ENCODE measurements at regions of chr12 and their contacts with region 1.

Region 1: GRCh38 chr12:20369305-20370005 is 1.1 kb downstream of the PDE3A start:
- DNase-seq: peak; percentile 82 to 92 (median 90)
- ATAC-seq: peak; percentile 67 to 88 (median 82)
- H3K4me3 ChIP-seq: peak overlapping the region; percentile 62 to 88 (median 76)
- H3K27ac ChIP-seq: peak overlapping the region; percentile 88 to 98 (median 96)
- H3K4me1 ChIP-seq: peaks cover 0 to 16% (median 4%) of the 10 kb centered on the region in 12 donors
- H3K27me3 ChIP-seq: peaks cover 0 to 16% (median 0%) of the 10 kb centered on the region in 9 donors
- CTCF ChIP-seq: peak in 8 of 12 donors; percentile 22 to 52 (median 37)
- POLR2A ChIP-seq: peak in 1 of 2 donors; percentile 91

Region 2: DNA sequence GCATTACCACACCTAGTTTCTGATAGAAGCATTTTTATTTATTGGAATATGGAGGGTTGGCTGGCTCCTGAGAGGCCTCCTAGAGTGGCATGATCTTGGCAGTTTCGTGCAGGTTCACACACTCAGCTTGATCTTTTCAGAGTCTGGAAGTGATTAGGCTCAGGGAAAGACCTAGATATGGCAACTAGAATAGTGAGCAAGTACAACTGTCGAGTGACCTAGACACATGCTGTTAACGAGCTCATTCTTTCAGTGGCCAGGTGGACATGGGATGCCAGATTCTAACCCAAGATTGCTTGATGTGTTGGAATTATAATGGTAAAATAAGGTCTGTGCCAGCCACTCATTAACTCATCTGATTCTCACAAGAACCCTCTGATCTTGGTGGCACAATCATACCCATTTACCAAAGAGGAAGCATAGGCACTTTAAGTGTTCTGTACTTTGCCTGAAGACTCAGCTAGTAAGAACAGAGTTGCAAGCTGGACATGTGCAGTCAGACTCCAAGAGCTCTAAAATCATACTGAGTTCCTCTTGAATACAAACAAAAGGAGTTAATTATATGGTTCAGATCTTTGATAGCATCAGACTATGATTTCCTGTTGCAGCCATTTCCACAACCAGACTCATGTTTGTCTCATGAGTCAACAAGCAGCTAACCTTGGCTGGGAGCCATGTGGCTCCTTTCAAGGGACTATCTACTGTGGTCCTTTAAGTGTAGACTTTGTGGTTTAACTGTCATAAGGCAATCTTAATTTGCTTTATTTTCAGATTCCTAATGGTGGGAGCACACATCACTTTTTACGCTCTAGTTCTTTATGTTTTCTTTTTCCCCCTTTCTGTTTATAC is 1095.7 kb before region 1 on chr12:
- intact Hi-C with region 1: no loop called
- DNase-seq: peak; percentile 72 to 85 (median 83)
- ATAC-seq: peak; percentile 24 to 94 (median 88)
- H3K4me3 ChIP-seq: no peak overlapping the region
- H3K27ac ChIP-seq: peak overlapping the region in 7 of 12 donors; percentile 6 to 41 (median 26)
- H3K4me1 ChIP-seq: peaks cover 0 to 26% (median 12%) of the 10 kb centered on the region in 12 donors
- H3K27me3 ChIP-seq: no peaks in the 10 kb centered on the region
- CTCF ChIP-seq: no peak
- POLR2A ChIP-seq: no peak

Region 3: DNA sequence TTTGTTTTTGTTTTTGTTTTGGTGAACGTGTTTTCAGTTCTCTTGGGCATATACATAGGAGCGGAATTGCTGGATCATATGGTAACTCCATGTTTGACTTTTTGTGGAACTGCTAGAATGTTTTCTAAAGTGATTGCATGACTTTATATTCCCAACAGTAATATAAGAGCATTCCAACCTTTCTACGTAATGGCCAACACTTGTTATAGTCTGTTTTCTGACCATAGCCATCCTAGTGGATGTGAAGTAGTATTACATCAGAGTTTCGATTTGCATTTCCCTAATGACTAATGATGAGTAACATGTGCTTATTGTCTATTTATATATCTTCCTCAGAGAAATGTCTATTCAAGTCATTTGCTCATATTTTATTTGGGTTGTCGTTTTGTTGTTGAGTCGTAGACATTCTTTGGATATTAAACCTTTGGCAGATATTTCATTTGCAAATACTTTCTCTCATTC is 661.5 kb before region 1 on chr12:
- intact Hi-C with region 1: no loop called
- DNase-seq: no peak
- ATAC-seq: no peak
- H3K4me3 ChIP-seq: no peak overlapping the region
- H3K27ac ChIP-seq: no peak overlapping the region
- H3K4me1 ChIP-seq: peaks cover 0 to 13% (median 2%) of the 10 kb centered on the region in 12 donors
- H3K27me3 ChIP-seq: no peaks in the 10 kb centered on the region
- CTCF ChIP-seq: peak in 2 of 12 donors; percentile 8 to 21
- POLR2A ChIP-seq: no peak

Region 4: DNA sequence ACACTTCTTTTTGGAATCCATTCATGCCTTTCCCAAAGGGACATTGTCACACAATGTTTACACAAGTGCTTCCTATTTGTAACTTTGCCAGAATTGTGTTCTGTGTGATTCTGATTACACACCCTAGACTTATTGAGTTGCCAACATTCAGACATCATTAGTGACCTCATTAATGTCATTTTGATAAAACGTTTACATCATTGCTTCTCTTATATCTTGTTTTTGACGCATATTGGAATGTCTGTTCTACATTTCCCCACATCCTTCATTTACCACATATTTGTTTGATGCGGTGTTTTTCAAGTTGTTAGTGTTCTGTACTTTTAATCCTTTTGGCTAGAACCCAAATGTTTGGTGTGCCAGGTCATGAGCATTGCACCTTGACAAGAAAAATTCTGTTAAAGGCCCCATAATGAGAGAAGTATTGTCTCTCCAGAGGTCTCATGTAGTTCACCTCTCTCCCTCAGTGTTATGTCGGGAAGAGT is 624.7 kb before region 1 on chr12:
- intact Hi-C with region 1: loop called in 3 of 10 experiments (anchors 5 to 10 kb)
- DNase-seq: no peak
- ATAC-seq: peak; percentile 78 to 92 (median 89)
- H3K4me3 ChIP-seq: no peak overlapping the region
- H3K27ac ChIP-seq: peak overlapping the region in 9 of 12 donors; percentile 28 to 75 (median 61)
- H3K4me1 ChIP-seq: peaks cover 4 to 27% (median 20%) of the 10 kb centered on the region in 12 donors
- H3K27me3 ChIP-seq: no peaks in the 10 kb centered on the region
- CTCF ChIP-seq: no peak
- POLR2A ChIP-seq: no peak

Region 5: DNA sequence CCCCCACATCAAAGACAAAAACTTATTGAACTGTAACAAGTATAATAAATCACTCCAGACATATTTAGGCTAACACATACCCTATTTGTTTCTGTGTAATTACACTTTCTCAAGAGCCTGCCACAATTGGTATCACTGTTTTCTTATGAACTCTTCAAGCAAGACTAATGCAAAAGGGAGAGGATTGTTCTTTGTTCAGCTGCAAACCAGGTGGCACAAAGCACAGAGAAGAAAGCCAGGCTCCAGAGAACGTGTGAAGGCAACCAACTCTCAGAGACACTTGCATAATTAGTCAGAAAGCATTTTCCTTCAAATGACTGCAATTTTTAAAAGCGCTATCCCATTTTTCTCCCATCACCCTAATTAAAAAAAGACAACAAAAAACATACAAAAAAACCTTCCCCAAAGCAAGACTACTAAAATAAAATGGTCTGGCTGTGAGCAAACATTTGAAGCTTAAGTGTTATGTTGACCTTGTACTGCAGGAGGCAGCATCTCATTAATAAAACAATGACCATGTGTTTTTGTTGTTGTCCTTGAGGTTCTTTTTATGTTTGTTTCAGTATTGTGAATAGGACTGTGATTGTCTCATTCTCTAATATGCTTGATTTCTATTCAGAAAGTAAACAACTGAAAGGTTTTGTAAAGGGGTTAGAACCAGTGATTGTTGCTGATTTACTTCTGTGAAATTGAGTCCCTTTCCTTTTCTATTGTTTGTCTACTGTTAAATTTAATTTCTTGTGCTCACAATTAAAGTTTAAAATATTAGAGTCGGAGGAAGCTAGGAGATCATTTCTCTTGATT is 453.9 kb before region 1 on chr12:
- intact Hi-C with region 1: loop called in 6 of 10 experiments (anchors 5 to 10 kb)
- DNase-seq: no peak
- ATAC-seq: peak; percentile 45 to 84 (median 69)
- H3K4me3 ChIP-seq: no peak overlapping the region
- H3K27ac ChIP-seq: peak overlapping the region in 9 of 12 donors; percentile 10 to 59 (median 45)
- H3K4me1 ChIP-seq: peaks cover 0 to 26% (median 3%) of the 10 kb centered on the region in 12 donors
- H3K27me3 ChIP-seq: no peaks in the 10 kb centered on the region
- CTCF ChIP-seq: peak; percentile 41 to 76 (median 64)
- POLR2A ChIP-seq: no peak

Region 6: GRCh38 chr12:20000229-20000869 is 369.1 kb before region 1 on chr12:
- intact Hi-C with region 1: loop called in 4 of 10 experiments (anchors 5 to 10 kb)
- DNase-seq: no peak
- ATAC-seq: peak; percentile 63 to 83 (median 72)
- H3K4me3 ChIP-seq: no peak overlapping the region
- H3K27ac ChIP-seq: peak overlapping the region; percentile 2 to 82 (median 54)
- H3K4me1 ChIP-seq: peaks cover 0 to 20% (median 2%) of the 10 kb centered on the region in 12 donors
- H3K27me3 ChIP-seq: no peaks in the 10 kb centered on the region
- CTCF ChIP-seq: no peak
- POLR2A ChIP-seq: no peak

Region 7: DNA sequence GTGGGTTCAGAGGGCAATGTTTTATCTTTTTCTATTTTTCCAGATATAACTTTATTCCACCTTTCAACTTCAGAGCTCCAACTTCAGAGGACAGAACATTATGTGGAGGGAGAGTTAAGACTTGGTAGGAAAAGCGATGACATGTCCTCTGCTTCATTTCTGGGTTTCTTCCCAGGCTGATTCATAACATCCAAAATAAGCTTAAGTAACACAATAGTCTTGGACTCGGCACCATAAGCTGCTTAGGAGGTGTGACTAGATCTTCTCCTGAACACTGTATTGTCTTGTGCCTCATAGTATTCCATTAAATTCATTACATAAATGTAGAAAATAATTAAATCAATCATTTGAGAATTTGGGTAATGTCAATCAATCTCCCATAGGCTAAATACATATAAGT is 96.7 kb before region 1 on chr12:
- intact Hi-C with region 1: loop called in 7 of 10 experiments (anchors 5 to 10 kb)
- DNase-seq: no peak
- ATAC-seq: peak; percentile 76 to 83 (median 80)
- H3K4me3 ChIP-seq: peak overlapping the region in 1 of 12 donors; percentile 30
- H3K27ac ChIP-seq: peak overlapping the region; percentile 28 to 91 (median 71)
- H3K4me1 ChIP-seq: peaks cover 0 to 53% (median 16%) of the 10 kb centered on the region in 12 donors
- H3K27me3 ChIP-seq: no peaks in the 10 kb centered on the region
- CTCF ChIP-seq: no peak
- POLR2A ChIP-seq: no peak

Region 8: DNA sequence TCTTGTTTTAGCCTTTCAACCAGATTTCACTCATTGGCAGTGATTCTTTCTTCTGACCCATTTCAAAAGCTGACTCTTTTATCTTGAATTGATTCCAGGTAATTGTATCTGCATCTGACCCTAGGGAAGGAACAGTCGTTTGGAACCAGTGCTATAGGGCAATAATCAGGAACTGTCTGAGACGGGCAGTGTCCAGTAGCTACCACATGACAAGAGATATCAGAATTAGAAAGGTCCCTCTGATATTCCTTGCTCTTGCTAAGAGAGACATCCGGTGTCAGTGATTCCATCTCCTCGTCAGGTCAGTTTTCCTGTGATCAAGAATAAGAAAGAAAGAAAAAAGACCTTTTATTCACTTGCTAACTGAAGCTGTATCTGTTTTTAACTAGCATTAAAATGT is 48.9 kb before region 1 on chr12:
- intact Hi-C with region 1: loop called in 7 of 10 experiments (anchors 2 to 10 kb)
- DNase-seq: no peak
- ATAC-seq: peak; percentile 86 to 95 (median 93)
- H3K4me3 ChIP-seq: peak overlapping the region in 9 of 12 donors; percentile 26 to 51 (median 38)
- H3K27ac ChIP-seq: peak overlapping the region; percentile 9 to 92 (median 71)
- H3K4me1 ChIP-seq: peaks cover 0 to 6% (median 0%) of the 10 kb centered on the region in 12 donors
- H3K27me3 ChIP-seq: no peaks in the 10 kb centered on the region
- CTCF ChIP-seq: no peak
- POLR2A ChIP-seq: no peak

Region 9: GRCh38 chr12:20477672-20478071 is 108.2 kb after region 1 on chr12:
- intact Hi-C with region 1: no loop called
- DNase-seq: no peak
- ATAC-seq: peak in 3 of 4 donors; percentile 27 to 34 (median 29)
- H3K4me3 ChIP-seq: peak overlapping the region in 3 of 12 donors; percentile 3 to 15 (median 6)
- H3K27ac ChIP-seq: peak overlapping the region in 4 of 12 donors; percentile 12 to 41 (median 36)
- H3K4me1 ChIP-seq: peaks cover 0 to 74% (median 26%) of the 10 kb centered on the region in 12 donors
- H3K27me3 ChIP-seq: no peaks in the 10 kb centered on the region
- CTCF ChIP-seq: no peak
- POLR2A ChIP-seq: no peak

Region 10: GRCh38 chr12:20520532-20520931 is 151.1 kb after region 1 on chr12:
- intact Hi-C with region 1: no loop called
- DNase-seq: no peak
- ATAC-seq: peak; percentile 52 to 77 (median 64)
- H3K4me3 ChIP-seq: no peak overlapping the region
- H3K27ac ChIP-seq: peak overlapping the region in 5 of 12 donors; percentile 3 to 26 (median 12)
- H3K4me1 ChIP-seq: peaks cover 0 to 65% (median 27%) of the 10 kb centered on the region in 12 donors
- H3K27me3 ChIP-seq: no peaks in the 10 kb centered on the region
- CTCF ChIP-seq: no peak
- POLR2A ChIP-seq: no peak

Region 11: GRCh38 chr12:20596061-20596460 is 226.6 kb after region 1 on chr12:
- intact Hi-C with region 1: loop called in 4 of 10 experiments (anchors 5 to 10 kb)
- DNase-seq: no peak
- ATAC-seq: no peak
- H3K4me3 ChIP-seq: no peak overlapping the region
- H3K27ac ChIP-seq: no peak overlapping the region
- H3K4me1 ChIP-seq: peaks cover 0 to 43% (median 11%) of the 10 kb centered on the region in 12 donors
- H3K27me3 ChIP-seq: no peaks in the 10 kb centered on the region
- CTCF ChIP-seq: no peak
- POLR2A ChIP-seq: no peak

Measured in heart left ventricle (tissue), 16 donors.